ENCODE measurements at regions of chr17 and their contacts with region 1.

Region 1: GRCh38 chr17:63773381-63774140 is at the start of gene CCDC47:
- DNase-seq: peak; percentile 98 to 99 (median 99)
- ATAC-seq: peak; percentile 93 to 96 (median 96)
- H3K4me3 ChIP-seq: peak within 1 kb of the TSS; percentile 65 to 99 (median 82)
- H3K27ac ChIP-seq: peak within 1 kb of the TSS; percentile 88 to 99 (median 98)
- H3K4me1 ChIP-seq: peaks cover 3 to 69% (median 43%) of the 10 kb centered on the region in 12 donors
- H3K27me3 ChIP-seq: no peaks in the 10 kb centered on the region
- CTCF ChIP-seq: no peak
- POLR2A ChIP-seq: peak; percentile 79 to 97
- total RNA-seq, gene CCDC47: 54.4 to 115 (median 84.3) TPM

Region 2: GRCh38 chr17:63425482-63425881 is 348.1 kb before region 1 on chr17:
- intact Hi-C with region 1: loop called in 1 of 10 experiments (anchors 10 kb)
- DNase-seq: peak; percentile 78 to 83 (median 78)
- ATAC-seq: peak; percentile 52 to 90 (median 80)
- H3K4me3 ChIP-seq: no peak overlapping the region
- H3K27ac ChIP-seq: no peak overlapping the region
- H3K4me1 ChIP-seq: peaks cover 0 to 35% (median 10%) of the 10 kb centered on the region in 12 donors
- H3K27me3 ChIP-seq: no peaks in the 10 kb centered on the region
- CTCF ChIP-seq: peak; percentile 89 to 99 (median 96)
- POLR2A ChIP-seq: no peak

Region 3: DNA sequence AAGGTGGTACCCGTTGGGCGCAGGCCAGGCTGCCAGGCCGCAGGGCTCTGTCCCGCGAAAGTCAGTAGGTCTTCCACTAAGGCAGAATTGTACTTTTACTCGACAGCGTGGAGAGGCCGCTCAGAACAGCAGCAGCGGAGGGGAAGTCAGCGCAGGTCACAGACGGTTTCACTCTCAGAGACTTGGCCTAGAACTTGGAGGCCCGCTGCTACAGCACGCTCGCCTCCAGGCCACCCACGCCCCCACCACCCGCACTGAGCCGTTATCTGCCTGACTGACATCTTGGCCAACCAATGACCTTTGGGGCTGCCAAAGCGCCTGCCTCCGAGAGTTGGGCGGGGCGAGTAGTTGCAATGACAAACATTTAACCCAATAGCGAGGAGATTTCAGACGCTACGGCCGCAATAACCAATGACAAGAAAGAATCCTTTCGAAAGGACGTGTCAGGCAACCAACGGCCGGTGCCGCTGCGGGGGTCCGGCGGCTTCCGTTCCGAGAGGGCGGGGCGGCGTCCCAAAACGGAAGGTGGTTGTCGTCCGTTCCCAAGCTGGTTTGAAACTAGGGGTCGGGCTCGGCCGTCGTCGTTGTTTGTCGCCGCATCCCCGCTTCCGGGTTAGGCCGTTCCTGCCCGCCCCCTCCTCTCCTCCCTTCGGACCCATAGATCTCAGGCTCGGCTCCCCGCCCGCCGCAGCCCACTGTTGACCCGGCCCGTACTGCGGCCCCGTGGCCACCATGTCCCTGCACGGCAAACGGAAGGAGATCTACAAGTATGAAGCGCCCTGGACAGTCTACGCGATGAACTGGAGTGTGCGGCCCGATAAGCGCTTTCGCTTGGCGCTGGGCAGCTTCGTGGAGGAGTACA is 223.4 kb before region 1 on chr17 and contains the start of gene DCAF7:
- intact Hi-C with region 1: loop called in 1 of 10 experiments (anchors 5 kb)
- DNase-seq: peak; percentile 98 to 100 (median 100)
- ATAC-seq: peak; percentile 97 to 99 (median 98)
- H3K4me3 ChIP-seq: peak within 1 kb of the TSS; percentile 66 to 99 (median 76)
- H3K27ac ChIP-seq: peak within 1 kb of the TSS; percentile 79 to 97 (median 90)
- H3K4me1 ChIP-seq: peaks cover 2 to 53% (median 38%) of the 10 kb centered on the region in 12 donors
- H3K27me3 ChIP-seq: no peaks in the 10 kb centered on the region
- CTCF ChIP-seq: peak in 1 of 12 donors; percentile 11
- POLR2A ChIP-seq: peak in 1 of 2 donors; percentile 62
- total RNA-seq, gene DCAF7: 30.2 to 61.8 (median 47.8) TPM

Region 4: GRCh38 chr17:63741221-63742049 is 32.1 kb before region 1 on chr17 and contains the start of gene STRADA:
- intact Hi-C with region 1: loop called in 1 of 10 experiments (anchors 2 kb)
- DNase-seq: peak; percentile 98 to 99 (median 99)
- ATAC-seq: peak; percentile 99 to 100 (median 100)
- H3K4me3 ChIP-seq: peak within 1 kb of the TSS; percentile 61 to 95 (median 78)
- H3K27ac ChIP-seq: peak within 1 kb of the TSS; percentile 56 to 96 (median 90)
- H3K4me1 ChIP-seq: peaks cover 0 to 22% (median 12%) of the 10 kb centered on the region in 12 donors
- H3K27me3 ChIP-seq: no peaks in the 10 kb centered on the region
- CTCF ChIP-seq: peak in 1 of 12 donors; percentile 6
- POLR2A ChIP-seq: peak; percentile 9 to 86
- total RNA-seq, gene STRADA: 10.2 to 26.1 (median 15.3) TPM

Region 5: DNA sequence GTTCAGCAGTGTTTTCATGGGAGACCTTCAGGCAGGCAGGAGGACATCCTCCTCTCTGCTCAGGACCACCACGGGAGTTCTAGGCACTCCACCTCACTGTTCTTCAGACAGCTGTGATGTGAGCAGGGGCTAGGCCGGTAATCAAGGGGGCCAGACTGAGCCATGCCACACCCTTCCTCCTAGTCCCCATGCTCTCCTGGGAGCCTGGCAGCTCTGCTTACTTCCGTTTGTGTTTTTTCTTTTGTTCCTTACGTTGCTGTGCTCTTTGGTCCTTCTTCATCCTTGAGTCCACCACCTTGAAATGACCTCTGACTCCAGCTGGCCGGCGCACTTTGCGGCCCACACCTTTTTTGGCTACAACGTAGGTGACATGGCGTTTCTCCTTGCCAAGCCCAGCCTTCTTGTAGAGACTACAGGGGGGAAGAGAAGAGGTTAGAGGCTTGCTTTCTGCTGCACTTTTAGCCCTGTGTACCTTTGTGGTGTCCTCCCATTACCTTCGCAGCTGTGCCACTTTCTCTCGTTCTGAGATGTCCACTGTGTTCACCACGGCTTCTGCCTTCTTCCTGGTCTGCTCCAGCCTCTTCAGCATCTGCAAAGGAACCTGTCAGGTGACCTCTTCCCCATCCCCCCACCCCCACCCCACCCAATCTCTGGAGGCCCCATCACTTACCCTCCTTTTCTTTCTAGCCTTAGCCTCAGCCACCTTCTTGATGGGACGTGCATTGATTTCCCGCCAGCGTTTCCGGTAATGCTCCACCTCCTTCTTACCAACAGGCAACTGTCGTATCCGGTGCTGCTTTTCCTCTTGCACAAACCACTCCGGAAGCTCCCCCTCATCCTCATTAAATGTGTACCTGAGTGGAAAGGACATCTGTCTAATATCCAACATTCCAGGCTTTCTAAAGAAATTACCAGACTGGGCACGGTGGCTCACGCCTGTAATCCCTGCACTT is 46.3 kb after region 1 on chr17:
- intact Hi-C with region 1: loop called in 6 of 10 experiments (anchors 5 to 10 kb)
- DNase-seq: no peak
- ATAC-seq: peak in 2 of 4 donors; percentile 31 to 71
- H3K4me3 ChIP-seq: no peak overlapping the region
- H3K27ac ChIP-seq: peak overlapping the region in 8 of 12 donors; percentile 13 to 64 (median 44)
- H3K4me1 ChIP-seq: peaks cover 0 to 12% (median under 1%) of the 10 kb centered on the region in 12 donors
- H3K27me3 ChIP-seq: no peaks in the 10 kb centered on the region
- CTCF ChIP-seq: no peak
- POLR2A ChIP-seq: no peak

Region 6: GRCh38 chr17:63827002-63827771 is 53.6 kb after region 1 on chr17 and contains the starts of genes FTSJ3 and PSMC5:
- intact Hi-C with region 1: loop called in 5 of 10 experiments (anchors 5 to 10 kb)
- DNase-seq: peak; percentile 96 to 98 (median 97)
- ATAC-seq: peak; percentile 93 to 97 (median 94)
- H3K4me3 ChIP-seq: peak within 1 kb of the TSS; percentile 63 to 96 (median 86)
- H3K27ac ChIP-seq: peak within 1 kb of the TSS; percentile 90 to 98 (median 96)
- H3K4me1 ChIP-seq: peaks cover 2 to 39% (median 25%) of the 10 kb centered on the region in 12 donors
- H3K27me3 ChIP-seq: no peaks in the 10 kb centered on the region
- CTCF ChIP-seq: peak in 10 of 12 donors; percentile 5 to 68 (median 44)
- POLR2A ChIP-seq: peak in 1 of 2 donors; percentile 85
- total RNA-seq, gene FTSJ3: 22.1 to 46.5 (median 25.7) TPM
- total RNA-seq, gene PSMC5: 64.7 to 143 (median 113) TPM

Region 7: DNA sequence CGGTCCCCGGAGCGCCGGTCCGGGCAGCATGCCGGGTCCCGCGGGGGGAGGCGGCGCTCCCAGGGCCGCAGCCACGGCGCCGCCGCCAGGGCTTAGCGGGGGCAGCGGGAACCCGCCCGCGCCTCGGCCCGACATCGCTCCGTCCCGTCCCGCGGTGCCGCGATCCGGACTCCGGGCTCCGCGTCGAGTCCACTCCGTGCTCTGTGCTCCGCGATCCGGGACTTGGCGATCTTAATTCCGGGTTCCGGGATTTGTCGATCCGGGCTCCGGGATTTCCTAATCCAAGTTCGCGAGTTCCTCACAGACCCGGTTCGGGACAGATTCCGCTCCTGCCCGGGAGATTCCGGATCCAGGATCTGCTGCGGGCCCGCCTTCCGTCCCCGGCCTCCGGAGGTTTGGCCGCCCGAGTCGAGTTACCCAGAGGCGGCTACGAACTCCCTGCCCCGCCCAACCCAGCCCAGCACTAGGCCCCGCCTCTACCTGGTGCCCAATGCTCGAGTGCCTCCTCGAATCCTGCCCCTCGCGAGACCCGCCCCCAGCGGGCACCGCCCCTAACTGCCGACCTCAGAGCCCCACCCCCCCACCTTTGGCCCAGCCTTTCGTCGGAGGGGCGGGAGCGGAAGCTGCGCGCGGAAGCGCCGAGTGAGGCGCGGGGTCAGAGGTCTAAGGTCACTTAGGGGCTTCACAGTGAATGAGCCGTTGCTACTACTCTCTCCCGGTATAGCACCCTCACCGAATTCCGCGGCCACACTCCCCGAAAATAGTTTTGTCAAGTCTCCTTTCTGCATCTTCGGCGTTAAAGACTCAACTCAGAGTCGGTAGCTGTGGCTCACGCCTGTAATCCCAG is 69.2 kb after region 1 on chr17 and contains the start of gene SMARCD2:
- intact Hi-C with region 1: loop called in 2 of 10 experiments (anchors 2 to 5 kb)
- DNase-seq: peak; percentile 99 to 100 (median 99)
- ATAC-seq: peak; percentile 86 to 92 (median 88)
- H3K4me3 ChIP-seq: peak within 1 kb of the TSS; percentile 69 to 99 (median 93)
- H3K27ac ChIP-seq: peak within 1 kb of the TSS; percentile 84 to 98 (median 94)
- H3K4me1 ChIP-seq: peaks cover 19 to 52% (median 44%) of the 10 kb centered on the region in 12 donors
- H3K27me3 ChIP-seq: no peaks in the 10 kb centered on the region
- CTCF ChIP-seq: peak in 3 of 12 donors; percentile 4 to 10 (median 7)
- POLR2A ChIP-seq: peak in 1 of 2 donors; percentile 90
- total RNA-seq, gene SMARCD2: 11.3 to 40.9 (median 24.1) TPM

Measured in heart left ventricle (tissue), 16 donors.